ENCODE measurements at regions of chr19 and their contacts with region 1.

Region 1: DNA sequence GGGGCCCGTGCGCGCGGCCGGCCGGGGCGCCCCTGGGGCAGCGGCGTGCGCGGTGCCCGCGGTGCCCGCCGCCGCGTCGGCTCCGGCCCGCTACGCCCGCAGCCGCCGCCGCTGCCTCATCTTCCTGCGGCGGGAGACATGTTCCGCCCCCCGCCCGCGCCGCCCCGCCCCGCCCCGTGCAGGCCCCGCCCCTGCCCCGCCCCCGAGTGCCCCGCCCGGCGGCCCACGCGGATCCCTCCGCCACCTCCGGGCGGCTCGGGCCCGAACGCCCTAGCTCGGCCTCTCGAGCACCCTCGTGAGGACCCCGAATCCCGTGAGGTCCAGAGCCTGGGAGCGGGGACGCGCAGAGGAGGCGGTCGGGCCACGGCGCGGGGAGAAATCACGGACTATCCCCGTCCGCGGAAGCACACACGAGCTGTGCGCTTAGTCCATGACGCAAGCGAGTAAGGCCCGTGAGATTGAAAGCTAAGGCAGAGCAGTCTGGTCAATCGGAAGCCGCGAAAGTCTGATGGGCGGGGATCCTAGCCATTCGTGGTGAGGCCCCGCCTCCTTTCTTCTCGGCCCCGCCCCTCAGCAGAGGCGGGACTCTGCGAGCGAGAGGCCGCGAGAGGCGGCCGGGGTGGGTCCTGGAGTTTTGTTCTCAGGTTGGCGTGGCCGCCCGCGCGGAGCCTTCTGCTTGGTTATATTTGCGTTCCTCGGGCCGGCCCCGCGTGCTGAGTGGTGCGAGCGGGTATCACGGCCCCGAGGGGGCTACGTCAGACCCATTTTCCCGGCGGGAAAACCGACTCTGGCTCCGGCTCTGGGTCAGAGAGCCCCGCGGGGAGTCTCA is at the start of gene TCF3:
- DNase-seq: peak; percentile 96
- ATAC-seq: peak; percentile 93
- H3K4me3 ChIP-seq: peak within 1 kb of the TSS; percentile 80
- H3K27ac ChIP-seq: peak within 1 kb of the TSS; percentile 92
- H3K4me1 ChIP-seq: no peaks in the 10 kb centered on the region
- H3K27me3 ChIP-seq: no peaks in the 10 kb centered on the region
- CTCF ChIP-seq: no peak
- total RNA-seq, gene TCF3: 147 and 196 TPM in 2 replicates

Region 2: DNA sequence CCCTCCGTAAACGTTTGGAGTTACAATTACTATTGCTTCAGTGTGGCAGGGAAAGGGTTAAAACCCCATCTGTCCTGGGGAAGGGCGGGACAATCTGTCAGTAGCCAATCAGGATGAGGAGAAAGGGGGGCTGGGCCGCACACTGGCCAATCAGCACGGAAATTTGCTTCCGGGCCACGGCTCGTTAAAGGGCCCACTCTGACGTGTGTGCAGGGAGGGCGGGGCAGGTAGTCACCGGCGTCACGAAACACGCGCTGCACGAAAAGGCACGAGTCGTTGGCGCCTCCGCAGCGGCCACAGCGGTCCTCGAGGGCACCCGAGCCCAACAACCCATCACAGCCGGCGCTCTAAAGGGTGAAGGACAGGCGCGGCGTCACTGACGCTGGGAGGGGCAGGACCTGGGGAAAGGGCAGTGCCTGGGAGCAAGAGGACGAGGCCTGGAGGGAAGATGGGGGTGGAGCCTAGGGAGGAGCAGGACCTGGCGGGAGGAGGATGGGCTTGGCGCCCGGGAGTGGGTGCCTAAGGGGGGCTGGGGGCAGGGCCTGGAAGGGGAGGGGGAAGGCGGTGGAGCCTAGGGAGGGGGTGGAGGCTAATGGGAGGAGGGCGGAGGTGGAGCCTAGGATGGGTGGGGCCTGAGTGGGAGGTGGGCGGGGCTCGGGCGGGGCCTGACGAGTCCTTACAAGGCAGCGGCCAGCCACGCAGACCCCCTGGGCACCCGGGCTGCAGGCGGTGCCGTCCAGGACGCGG is 144.7 kb before region 1 on chr19:
- CTCF ChIA-PET with region 1: no interaction called
- POLR2A ChIA-PET with region 1: no interaction called
- intact Hi-C with region 1: no loop called
- DNase-seq: peak; percentile 89
- ATAC-seq: peak; percentile 82
- H3K4me3 ChIP-seq: peak overlapping the region; percentile 66
- H3K27ac ChIP-seq: peak overlapping the region; percentile 78
- H3K4me1 ChIP-seq: peaks cover 3% of the 10 kb centered on the region; the same call in 1 of the 2 replicates
- H3K27me3 ChIP-seq: no peaks in the 10 kb centered on the region
- CTCF ChIP-seq: no peak

Region 3: DNA sequence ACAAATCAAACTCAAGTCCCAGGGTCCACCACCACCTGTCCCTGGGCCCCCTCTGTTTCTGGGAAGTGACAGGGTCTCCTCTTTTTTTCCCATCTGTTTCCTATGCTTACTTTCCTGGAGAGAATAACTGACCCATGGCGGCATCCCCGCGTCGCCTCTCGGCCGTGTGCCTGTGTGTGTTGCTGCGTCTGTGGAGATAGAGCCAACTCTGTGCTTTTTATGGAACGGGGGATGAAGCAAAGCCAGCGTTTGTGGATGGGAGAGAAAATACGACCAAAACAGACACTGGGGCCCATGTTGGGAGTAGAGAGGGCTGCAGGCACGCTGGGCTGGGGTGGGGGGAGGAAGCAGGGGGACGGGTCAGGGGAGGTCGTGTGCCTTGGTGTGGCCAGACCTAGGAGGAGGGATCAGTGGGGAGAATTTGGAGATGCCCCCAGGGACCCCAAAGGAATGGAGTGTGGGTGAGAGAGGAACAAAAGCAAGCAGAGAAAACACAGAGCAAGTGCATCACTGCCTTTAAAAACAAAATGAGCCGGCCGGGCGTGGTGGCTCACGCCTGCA is 112.2 kb before region 1 on chr19:
- CTCF ChIA-PET with region 1: no interaction called
- POLR2A ChIA-PET with region 1: no interaction called
- intact Hi-C with region 1: loop called (anchors 10 kb)
- DNase-seq: no peak
- ATAC-seq: no peak
- H3K4me3 ChIP-seq: no peak overlapping the region
- H3K27ac ChIP-seq: no peak overlapping the region
- H3K4me1 ChIP-seq: no peaks in the 10 kb centered on the region
- H3K27me3 ChIP-seq: no peaks in the 10 kb centered on the region
- CTCF ChIP-seq: no peak

Region 4: GRCh38 chr19:1585243-1585580 is 67.5 kb before region 1 on chr19:
- CTCF ChIA-PET with region 1: no interaction called
- POLR2A ChIA-PET with region 1: no interaction called
- intact Hi-C with region 1: no loop called
- DNase-seq: no peak
- ATAC-seq: no peak
- H3K4me3 ChIP-seq: no peak overlapping the region
- H3K27ac ChIP-seq: no peak overlapping the region
- H3K4me1 ChIP-seq: no peaks in the 10 kb centered on the region
- H3K27me3 ChIP-seq: no peaks in the 10 kb centered on the region
- CTCF ChIP-seq: no peak

Region 5: DNA sequence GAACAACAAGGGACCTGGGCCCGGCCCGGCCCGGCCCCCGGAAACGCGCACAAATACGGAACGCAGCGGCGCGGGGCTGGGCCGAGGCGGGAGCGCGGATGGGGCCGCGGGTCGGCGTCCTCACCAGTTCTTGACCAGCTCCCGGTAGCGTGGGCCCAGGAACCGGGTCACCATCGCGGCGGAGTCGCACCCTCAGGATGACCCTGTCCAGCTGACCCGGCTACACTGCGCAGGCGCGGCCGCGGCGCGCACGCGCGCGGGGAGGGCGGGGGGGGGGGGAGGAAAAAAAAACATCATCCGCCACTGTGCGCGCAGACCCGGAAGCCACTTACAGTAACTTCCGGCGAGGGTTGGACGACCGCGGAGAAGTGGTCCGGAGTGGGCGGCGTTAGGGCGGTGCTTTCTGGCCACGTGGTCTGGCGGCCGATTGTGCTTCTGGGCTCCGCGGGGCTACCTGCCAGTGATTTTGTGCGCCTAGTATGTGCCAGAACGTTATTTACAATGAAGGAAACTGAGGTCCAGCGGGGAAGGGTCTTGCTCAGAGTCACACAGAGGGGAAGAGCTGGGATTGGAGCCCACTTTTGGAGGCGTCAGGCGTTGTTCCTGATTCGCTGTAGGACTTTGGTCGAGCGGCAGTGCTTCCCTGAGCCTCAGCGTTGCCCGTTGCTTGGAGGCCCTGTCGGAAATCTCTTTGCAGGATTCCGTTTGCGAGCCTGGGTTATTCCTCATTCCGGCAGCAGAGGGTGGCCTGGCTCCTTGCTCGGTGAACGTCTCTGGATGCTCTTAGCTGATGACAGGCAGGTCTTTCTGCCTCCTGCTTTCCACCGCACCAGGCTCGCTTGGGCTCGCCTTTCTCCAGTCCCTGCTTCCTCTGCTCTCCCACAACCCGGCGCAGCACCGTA is 47.2 kb before region 1 on chr19 and contains the start of gene UQCR11:
- CTCF ChIA-PET with region 1: no interaction called
- POLR2A ChIA-PET with region 1: no interaction called
- intact Hi-C with region 1: loop called (anchors 5 kb)
- DNase-seq: peak; percentile 84
- ATAC-seq: peak; percentile 81
- H3K4me3 ChIP-seq: peak within 1 kb of the TSS; percentile 90
- H3K27ac ChIP-seq: peak within 1 kb of the TSS; percentile 68
- H3K4me1 ChIP-seq: peaks cover 19% of the 10 kb centered on the region
- H3K27me3 ChIP-seq: no peaks in the 10 kb centered on the region
- CTCF ChIP-seq: peak; percentile 50; the same call in 1 of the 2 replicates
- total RNA-seq, gene UQCR11: 148 and 157 TPM in 2 replicates

Measured in PC-3 (cell line).